PC-3 (cell line): ENCODE measurements at regions of chr3 and their contacts with region 1.

Region 1: GRCh38 chr3:119098619-119099222 is 47.2 kb upstream of the TEX55 start:
- DNase-seq: peak; percentile 81
- ATAC-seq: peak; percentile 55
- H3K4me3 ChIP-seq: no peak overlapping the region
- H3K27ac ChIP-seq: no peak overlapping the region
- H3K4me1 ChIP-seq: no peaks in the 10 kb centered on the region
- H3K27me3 ChIP-seq: no peaks in the 10 kb centered on the region; the same call in 1 of the 2 replicates
- CTCF ChIP-seq: peak; percentile 94

Region 2: GRCh38 chr3:118772547-118773011 is 326.1 kb before region 1 on chr3:
- CTCF ChIA-PET with region 1: no interaction called
- POLR2A ChIA-PET with region 1: no interaction called
- intact Hi-C with region 1: no loop called
- DNase-seq: peak; percentile 34
- ATAC-seq: no peak
- H3K4me3 ChIP-seq: no peak overlapping the region
- H3K27ac ChIP-seq: no peak overlapping the region
- H3K4me1 ChIP-seq: no peaks in the 10 kb centered on the region
- H3K27me3 ChIP-seq: no peaks in the 10 kb centered on the region
- CTCF ChIP-seq: no peak

Region 3: GRCh38 chr3:119034256-119035013 is 64.3 kb before region 1 on chr3 and contains the start of gene IGSF11:
- CTCF ChIA-PET with region 1: interaction called, 4 read pairs
- POLR2A ChIA-PET with region 1: no interaction called
- intact Hi-C with region 1: loop called (anchors 1 kb)
- DNase-seq: peak; percentile 68
- ATAC-seq: peak; percentile 89
- H3K4me3 ChIP-seq: peak within 1 kb of the TSS; percentile 79
- H3K27ac ChIP-seq: no peak within 1 kb of the TSS
- H3K4me1 ChIP-seq: peaks cover 6% of the 10 kb centered on the region; the same call in 1 of the 2 replicates
- H3K27me3 ChIP-seq: peaks cover 62% of the 10 kb centered on the region
- CTCF ChIP-seq: peak; percentile 77
- total RNA-seq, gene IGSF11: 0.66 TPM in 1 of 2 replicates, not detected in the other